ENCODE measurements at regions of chr20 and their contacts with region 1.

Region 1: GRCh38 chr20:36199345-36200257 is 36.7 kb upstream of the AAR2 start:
- DNase-seq: peak; percentile 87
- H3K4me3 ChIP-seq: no peak overlapping the region
- H3K27ac ChIP-seq: no peak overlapping the region
- H3K4me1 ChIP-seq: no peaks in the 10 kb centered on the region
- H3K27me3 ChIP-seq: no peaks in the 10 kb centered on the region
- CTCF ChIP-seq: peak; percentile 68 to 92 (median 86)
- EP300 ChIP-seq: no peak
- POLR2A ChIP-seq: no peak

Region 2: DNA sequence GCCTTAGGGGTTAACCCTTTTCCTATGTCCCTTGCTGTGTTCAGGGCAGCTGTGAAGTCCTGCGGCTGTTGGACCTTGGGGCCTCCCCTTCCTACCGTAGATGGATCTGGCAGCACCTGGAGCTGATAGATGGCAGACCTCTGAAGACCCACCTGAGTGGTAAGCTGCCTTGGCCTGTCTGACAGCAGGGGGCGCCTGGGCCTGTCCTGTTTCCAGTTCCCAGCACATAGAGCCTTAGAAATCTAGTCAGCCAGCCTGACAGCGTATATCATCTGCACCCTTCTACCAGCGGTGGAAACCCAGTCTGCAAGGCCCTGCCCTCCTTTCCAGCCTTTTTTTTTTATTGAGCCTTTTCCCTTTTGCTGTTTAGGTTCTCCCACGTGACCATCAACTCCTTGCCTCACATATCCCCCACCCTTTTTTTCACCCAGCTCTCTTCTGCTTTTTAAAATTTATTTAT is 204.6 kb before region 1 on chr20:
- intact Hi-C with region 1: loop called (anchors 5 kb)
- DNase-seq: peak; percentile 87
- H3K4me3 ChIP-seq: no peak overlapping the region
- H3K27ac ChIP-seq: no peak overlapping the region
- H3K4me1 ChIP-seq: no peaks in the 10 kb centered on the region
- H3K27me3 ChIP-seq: no peaks in the 10 kb centered on the region
- CTCF ChIP-seq: peak; percentile 68 to 82 (median 78)
- EP300 ChIP-seq: no peak
- POLR2A ChIP-seq: no peak

Region 3: DNA sequence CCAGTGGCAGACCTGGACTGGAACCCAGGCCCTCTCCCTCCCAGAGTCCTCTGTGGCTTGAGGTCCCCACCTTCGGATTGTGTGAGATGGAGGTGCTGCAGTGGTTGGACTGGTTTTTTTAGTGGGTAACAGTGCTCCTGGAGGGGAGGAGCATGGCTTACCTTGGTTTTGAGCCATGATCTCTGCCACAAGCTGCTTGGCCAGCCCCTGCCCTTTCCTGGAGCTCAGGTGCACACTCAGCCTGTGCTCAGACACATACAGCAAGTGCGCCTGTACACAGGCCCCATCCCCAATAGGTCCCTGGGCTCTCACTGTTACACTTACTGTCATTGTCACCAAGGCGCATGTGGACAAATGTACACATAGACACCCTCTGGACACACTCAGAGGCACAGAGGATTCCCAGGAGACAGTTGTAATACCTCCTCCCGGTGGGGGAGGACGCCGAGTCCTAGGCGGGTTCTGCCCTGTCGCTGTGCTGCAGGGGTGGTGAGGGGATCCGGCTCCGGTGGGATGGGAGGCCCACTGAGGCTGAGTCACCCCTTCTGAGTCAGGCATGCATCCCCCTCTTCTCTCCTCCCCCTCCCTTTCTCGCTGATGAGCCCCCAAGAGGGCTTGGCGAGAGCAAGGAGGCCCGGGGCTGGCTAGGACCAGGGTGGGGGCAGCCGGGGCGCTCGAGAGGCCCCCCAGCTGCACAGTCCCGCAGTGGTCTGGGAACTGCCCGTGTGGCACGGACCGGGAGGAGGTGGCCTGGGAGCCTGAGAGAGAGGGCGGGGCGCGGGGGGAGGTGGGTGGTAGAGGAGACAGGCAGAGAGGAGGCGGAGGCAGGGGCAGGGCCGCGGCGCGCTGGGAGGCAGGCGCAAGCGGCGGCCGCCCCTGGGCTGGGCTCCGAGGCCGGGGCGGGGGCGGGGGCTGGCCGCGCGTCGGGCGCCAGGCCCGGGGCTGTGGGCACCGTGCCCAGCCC is 45.6 kb before region 1 on chr20:
- intact Hi-C with region 1: loop called (anchors 1 kb)
- DNase-seq: peak; percentile 92
- H3K4me3 ChIP-seq: peak overlapping the region; percentile 53 to 83 (median 70)
- H3K27ac ChIP-seq: peak overlapping the region; percentile 61 to 84 (median 73)
- H3K4me1 ChIP-seq: peaks cover 3 to 33% (median 29%) of the 10 kb centered on the region in 4 donors
- H3K27me3 ChIP-seq: no peaks in the 10 kb centered on the region
- CTCF ChIP-seq: no peak
- EP300 ChIP-seq: no peak
- POLR2A ChIP-seq: no peak

Region 4: DNA sequence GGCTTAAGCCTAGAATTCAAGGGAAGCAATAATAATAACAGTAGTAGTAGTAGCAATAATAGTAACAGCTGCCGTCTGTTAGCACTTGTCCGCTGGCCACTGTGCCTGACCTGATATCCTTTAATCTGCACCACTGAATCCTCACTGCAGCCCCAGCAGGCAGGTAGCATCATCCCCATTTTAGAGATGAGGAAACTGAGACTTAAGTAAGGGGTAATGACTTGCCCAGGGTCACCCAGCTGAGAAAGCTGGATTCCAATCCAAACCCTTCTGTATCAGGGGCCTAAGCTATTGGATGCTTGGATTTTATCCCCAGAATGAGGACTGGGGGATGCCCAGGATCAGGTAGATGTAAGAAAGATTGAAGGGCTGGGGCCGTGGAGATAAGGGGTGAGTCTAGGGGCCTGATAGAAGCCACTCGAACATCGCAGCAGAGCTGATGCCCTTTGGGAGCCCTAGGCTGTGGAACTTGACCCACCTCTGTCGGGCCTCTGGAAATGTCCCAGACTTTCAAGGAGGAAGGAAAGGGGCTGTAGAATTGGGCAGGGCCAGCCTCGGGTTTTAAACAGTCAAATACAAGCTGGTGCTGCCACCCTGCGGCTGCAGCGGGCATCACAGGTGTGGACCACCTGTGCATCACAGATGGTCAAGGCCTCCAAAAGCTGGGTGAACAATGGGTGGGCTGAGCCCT is 239.6 kb after region 1 on chr20:
- intact Hi-C with region 1: loop called (anchors 1 kb)
- DNase-seq: no peak
- H3K4me3 ChIP-seq: no peak overlapping the region
- H3K27ac ChIP-seq: no peak overlapping the region
- H3K4me1 ChIP-seq: peaks cover 0 to 11% (median 6%) of the 10 kb centered on the region in 4 donors
- H3K27me3 ChIP-seq: peaks cover 2 to 9% (median 4%) of the 10 kb centered on the region in 3 donors
- CTCF ChIP-seq: peak; percentile 33 to 83 (median 76)
- EP300 ChIP-seq: no peak
- POLR2A ChIP-seq: no peak